ENCODE measurements at regions of chr11 and their contacts with region 1.

Region 1: DNA sequence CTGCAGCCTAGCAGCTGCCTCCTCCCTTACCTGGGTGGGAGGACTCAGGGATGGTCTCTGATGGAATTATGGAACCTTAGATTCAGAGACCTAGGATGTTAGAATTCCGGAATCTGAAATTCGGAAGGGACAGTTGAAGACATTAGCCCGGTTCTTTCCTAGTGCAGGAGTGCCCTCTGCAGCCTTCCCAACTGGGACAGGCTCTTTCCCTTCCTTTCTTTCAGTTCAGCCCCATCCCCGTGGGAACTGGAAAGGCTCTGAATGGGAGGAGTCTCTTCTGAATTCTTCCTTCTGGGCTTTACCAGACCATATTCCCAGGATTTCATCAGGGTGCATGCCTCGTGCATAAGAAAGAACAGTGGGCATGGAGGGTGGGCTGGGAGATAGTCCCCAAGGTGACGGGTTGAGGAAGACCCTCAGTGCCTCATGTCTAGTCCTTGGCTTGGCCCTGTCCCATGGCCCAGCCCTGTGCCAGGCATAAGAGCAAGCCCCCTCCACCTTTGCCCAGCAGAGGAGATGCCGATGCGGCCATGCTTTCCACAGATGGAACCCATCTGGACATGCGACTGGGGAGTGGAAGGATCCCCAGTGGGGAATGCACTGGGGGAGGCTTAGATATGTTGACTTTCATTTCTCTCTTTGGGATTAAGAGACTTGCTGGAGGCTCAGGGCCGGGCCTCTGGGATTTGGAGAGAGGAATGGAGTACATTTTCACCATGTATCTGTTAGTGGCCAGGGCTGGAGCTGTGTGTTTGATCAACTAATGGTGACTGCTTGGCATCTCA is 14.4 kb downstream of the DNAJB13 start:
- DNase-seq: no peak
- H3K4me3 Mint-ChIP-seq: no peak overlapping the region
- H3K27ac Mint-ChIP-seq: no peak overlapping the region
- H3K4me1 Mint-ChIP-seq: peaks cover 32% of the 10 kb centered on the region
- H3K27me3 Mint-ChIP-seq: peaks cover 23% of the 10 kb centered on the region

Region 2: DNA sequence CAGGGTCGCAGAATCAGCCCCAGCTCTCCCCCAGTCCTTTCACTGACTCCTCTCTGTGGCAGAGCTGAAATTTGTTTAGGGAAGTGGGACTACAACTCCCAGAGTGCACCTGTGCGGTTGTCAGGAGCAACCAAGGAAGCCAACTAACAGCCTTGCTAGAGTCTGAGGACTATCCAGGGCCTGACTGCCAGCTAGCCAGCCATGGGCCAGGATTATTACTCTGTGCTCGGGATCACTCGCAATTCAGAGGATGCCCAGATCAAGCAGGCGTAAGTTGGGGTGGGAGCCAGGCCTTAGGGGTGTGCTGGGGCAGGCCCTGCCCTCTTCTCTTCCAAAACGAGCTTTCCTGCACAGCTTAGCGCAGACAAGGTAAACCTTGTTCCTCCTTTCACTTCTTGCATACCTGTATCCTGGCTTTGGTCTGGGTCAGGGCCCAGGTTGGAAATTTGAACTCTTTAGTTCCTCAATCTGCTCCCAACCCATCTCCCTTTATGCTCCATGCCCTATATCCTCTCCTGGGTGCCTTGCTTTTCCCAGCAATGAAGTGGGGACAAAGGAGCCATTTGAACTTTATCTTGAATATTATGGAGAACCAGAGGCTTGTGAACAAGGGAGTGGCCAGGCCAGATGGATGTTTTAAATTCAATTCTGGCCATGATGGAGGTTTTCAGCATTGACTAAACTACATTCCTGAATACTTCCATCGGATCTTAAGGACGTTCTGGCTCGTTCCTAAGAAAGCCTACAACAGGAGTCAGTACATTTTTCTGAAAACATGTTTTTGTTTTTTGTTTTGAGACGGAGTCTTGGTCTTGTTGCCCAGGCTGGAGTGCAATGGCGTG is 14.2 kb before region 1 on chr11 and contains the start of gene DNAJB13:
- CTCF ChIA-PET with region 1: no interaction called
- DNase-seq: peak; percentile 59
- H3K4me3 Mint-ChIP-seq: no peak within 1 kb of the TSS
- H3K27ac Mint-ChIP-seq: no peak within 1 kb of the TSS
- H3K4me1 Mint-ChIP-seq: peaks cover 1% of the 10 kb centered on the region
- H3K27me3 Mint-ChIP-seq: peaks cover 4% of the 10 kb centered on the region

Region 3: DNA sequence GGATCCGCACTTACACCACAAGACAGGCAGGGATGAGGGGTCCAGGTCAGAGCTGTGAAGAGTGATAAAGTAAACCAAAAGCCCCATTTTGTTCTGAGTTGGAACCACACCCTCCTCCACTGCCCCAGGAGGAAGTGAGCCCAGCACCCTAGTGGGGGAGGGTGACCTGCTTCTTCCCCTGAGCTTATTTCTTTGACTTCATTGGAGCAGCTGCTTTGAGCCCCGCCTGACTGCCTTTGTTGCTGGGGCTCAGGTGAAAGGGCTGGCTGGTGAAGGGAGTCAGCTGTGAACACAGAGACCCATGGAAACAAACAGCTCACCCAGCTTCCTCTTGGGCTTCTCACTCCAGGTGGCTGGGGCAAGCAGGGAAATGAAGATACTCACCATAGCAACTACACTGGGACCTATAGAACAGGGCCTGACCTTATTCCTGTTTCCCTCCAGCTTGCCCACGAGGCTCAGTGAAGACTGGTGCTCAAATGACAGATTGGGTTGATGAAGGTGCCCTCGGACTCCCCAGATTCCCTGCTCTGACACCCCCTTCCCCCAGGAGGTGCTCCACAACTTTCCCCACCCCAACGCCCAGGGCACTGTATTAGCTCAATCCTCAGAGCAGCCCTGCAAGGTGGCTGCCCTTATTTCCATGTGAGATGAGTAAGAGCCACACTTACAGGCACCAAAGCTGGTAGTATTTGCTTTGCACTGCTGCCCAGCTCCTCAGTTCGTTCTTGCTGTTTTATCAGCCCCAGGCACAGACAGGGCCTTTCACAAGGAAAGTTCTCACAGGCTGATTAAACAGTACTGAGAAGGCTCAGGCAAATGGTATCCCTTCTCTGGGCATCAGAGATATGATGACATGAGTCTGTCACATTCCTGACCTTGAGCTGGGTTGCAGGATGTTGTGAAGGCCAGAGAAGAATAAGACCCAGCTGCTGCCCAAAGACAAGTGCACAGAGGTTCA is 15.0 kb after region 1 on chr11:
- CTCF ChIA-PET with region 1: interaction called, 15 read pairs
- DNase-seq: peak; percentile 94
- H3K4me3 Mint-ChIP-seq: peak overlapping the region; percentile 93
- H3K27ac Mint-ChIP-seq: peak overlapping the region; percentile 97
- H3K4me1 Mint-ChIP-seq: peaks cover 68% of the 10 kb centered on the region
- H3K27me3 Mint-ChIP-seq: no peaks in the 10 kb centered on the region

Region 4: GRCh38 chr11:74170694-74171629 is 205.7 kb after region 1 on chr11 and contains the starts of genes C2CD3 and PPME1:
- CTCF ChIA-PET with region 1: interaction called, 10 read pairs
- DNase-seq: peak; percentile 99
- H3K4me3 Mint-ChIP-seq: no peak within 1 kb of the TSS
- H3K27ac Mint-ChIP-seq: no peak within 1 kb of the TSS
- H3K4me1 Mint-ChIP-seq: peaks cover 11% of the 10 kb centered on the region
- H3K27me3 Mint-ChIP-seq: no peaks in the 10 kb centered on the region

Region 5: GRCh38 chr11:74321487-74322188 is 356.4 kb after region 1 on chr11:
- CTCF ChIA-PET with region 1: interaction called, 10 read pairs
- DNase-seq: peak; percentile 48
- H3K4me3 Mint-ChIP-seq: no peak overlapping the region
- H3K27ac Mint-ChIP-seq: no peak overlapping the region
- H3K4me1 Mint-ChIP-seq: no peaks in the 10 kb centered on the region
- H3K27me3 Mint-ChIP-seq: peaks cover 25% of the 10 kb centered on the region